ENCODE measurements at regions of chr1 and their contacts with region 1.

Region 1: DNA sequence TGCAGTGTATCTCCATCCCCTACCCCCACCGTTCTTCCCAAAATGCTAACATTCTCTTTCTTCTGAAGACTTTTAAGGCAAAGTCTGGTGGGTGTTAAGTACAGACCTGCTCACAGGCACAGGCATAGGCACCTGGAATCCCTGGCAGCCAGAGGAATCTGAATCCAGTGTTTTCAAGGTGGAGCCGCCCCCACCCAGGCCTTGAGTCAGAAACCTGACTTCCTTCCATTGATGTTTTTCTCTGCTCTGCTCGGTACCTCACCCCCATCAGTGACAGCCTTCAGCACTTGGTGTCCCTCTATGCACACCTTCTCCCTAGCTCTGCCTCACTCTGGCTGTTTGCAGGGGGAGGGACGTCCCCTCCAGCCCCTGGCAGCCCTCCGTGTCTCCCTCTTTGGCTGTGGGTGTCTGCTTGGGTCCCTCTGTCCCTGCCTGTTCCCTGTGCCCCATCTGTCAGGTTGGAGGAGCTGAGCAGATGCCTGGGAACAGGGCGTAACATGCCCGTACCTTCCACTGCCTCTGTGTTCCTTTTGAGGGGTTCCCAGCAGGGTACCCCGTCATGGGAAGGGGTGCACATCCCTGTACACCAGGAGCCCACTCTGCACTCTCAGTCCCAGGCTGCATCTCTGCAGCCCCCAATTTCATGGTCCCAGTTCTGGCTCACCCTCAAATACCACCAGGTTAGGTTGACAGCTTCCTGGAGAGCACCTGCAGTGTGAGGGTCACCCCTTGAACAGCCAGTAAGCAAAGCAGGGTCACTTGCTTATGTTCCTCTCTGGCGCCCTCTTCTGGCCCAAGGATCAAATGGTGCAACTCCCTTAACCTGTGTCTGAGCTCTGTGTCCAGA is 6.7 kb downstream of the NCDN start:
- DNase-seq: peak; percentile 93
- ATAC-seq: peak; percentile 83
- H3K4me3 Mint-ChIP-seq: no peak overlapping the region
- H3K27ac Mint-ChIP-seq: peak overlapping the region; percentile 50
- H3K4me1 Mint-ChIP-seq: peaks cover 24% of the 10 kb centered on the region
- H3K27me3 Mint-ChIP-seq: no peaks in the 10 kb centered on the region
- CTCF ChIP-seq: peak; percentile 83

Region 2: GRCh38 chr1:35577071-35577998 is 13.1 kb after region 1 on chr1:
- CTCF ChIA-PET with region 1: interaction called, 12 read pairs
- POLR2A ChIA-PET with region 1: interaction called, 8 read pairs
- intact Hi-C with region 1: no loop called
- DNase-seq: peak; percentile 81
- ATAC-seq: peak; percentile 92
- H3K4me3 Mint-ChIP-seq: peak overlapping the region; percentile 81
- H3K27ac Mint-ChIP-seq: peak overlapping the region; percentile 87
- H3K4me1 Mint-ChIP-seq: peaks cover 20% of the 10 kb centered on the region
- H3K27me3 Mint-ChIP-seq: peaks cover 10% of the 10 kb centered on the region
- CTCF ChIP-seq: no peak

Region 3: GRCh38 chr1:35769188-35769758 is 205.0 kb after region 1 on chr1:
- CTCF ChIA-PET with region 1: interaction called, 15 read pairs
- POLR2A ChIA-PET with region 1: interaction called, 6 read pairs
- intact Hi-C with region 1: loop called (anchors 2 kb)
- DNase-seq: peak; percentile 91
- ATAC-seq: peak; percentile 83
- H3K4me3 Mint-ChIP-seq: peak overlapping the region; percentile 86
- H3K27ac Mint-ChIP-seq: peak overlapping the region; percentile 81
- H3K4me1 Mint-ChIP-seq: peaks cover 14% of the 10 kb centered on the region
- H3K27me3 Mint-ChIP-seq: no peaks in the 10 kb centered on the region
- CTCF ChIP-seq: peak; percentile 29

Region 4: DNA sequence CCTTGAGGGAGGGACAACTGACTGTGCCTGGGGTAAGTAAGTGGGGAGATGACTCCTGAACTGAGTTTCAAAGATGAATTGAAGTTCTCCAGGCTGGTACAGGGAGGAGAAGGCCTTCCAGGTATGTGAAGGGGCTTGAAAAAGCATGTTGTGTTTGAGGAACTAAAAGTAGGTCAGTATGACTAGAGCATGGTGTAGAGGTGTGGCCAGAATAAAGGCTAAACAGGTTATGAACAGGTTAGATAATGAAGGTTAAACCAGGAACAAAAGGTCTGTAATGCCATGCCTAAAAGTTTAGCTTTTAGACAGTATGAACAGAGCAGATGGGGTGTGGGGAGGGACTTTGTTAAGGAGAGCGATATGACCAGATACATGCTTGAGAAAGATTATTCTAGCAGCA is 212.8 kb after region 1 on chr1:
- CTCF ChIA-PET with region 1: interaction called, 13 read pairs
- POLR2A ChIA-PET with region 1: interaction called, 3 read pairs
- intact Hi-C with region 1: loop called (anchors 2 kb)
- DNase-seq: no peak
- ATAC-seq: no peak
- H3K4me3 Mint-ChIP-seq: no peak overlapping the region
- H3K27ac Mint-ChIP-seq: no peak overlapping the region
- H3K4me1 Mint-ChIP-seq: peaks cover 2% of the 10 kb centered on the region
- H3K27me3 Mint-ChIP-seq: no peaks in the 10 kb centered on the region
- CTCF ChIP-seq: no peak